Activated CD8-positive, alpha-beta T cell treated with anti-CD3 and anti-CD28 coated beads, Interleukin-2, amount 10 ng/mL, durations not matched to agents 7 days and 5 days (primary cell): ENCODE measurements at regions of chr14 and their contacts with region 1.

Region 1: DNA sequence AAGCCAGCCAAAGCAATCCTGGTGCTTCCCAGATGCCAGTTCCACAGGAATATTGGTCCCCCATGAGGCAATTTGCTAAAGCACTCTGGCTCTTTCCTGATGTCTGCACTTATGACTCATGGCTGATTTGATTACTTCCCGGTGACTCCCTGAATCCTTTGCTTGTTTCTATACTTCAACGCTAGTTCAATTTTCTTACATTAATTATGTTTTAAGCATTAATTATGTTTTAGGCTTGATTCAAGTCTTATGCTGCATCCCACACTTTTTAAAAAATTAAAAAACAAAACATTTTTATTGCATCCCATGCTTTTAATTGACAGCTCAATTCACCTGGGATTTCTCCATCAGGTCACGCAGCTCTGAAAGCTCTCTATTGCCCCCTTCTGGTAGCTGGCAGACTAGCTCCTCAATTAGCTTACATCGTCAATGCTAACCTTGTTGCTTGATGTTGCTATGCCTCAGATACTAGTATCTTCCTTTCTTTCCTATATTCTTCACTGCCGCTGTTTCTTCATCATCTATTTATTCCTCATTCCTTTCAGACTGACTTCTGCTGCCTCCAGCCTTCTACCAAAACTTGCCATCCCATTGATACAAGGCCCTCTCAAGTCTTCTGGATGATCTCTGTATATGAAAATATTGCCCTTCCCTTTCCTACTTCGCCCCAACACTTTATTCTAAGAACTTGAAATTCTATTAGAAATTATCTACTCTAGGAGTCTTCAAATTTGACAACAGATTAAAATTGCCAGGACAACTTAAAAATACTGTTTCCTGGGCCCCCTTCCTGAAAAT is 32.0 kb downstream of the TSHR start:
- DNase-seq: peak; percentile 77
- ATAC-seq: peak; percentile 78
- H3K4me3 Mint-ChIP-seq: no peak overlapping the region
- H3K27ac Mint-ChIP-seq: no peak overlapping the region
- H3K4me1 Mint-ChIP-seq: peaks cover 6% of the 10 kb centered on the region
- H3K27me3 Mint-ChIP-seq: peaks cover 3% of the 10 kb centered on the region

Region 2: DNA sequence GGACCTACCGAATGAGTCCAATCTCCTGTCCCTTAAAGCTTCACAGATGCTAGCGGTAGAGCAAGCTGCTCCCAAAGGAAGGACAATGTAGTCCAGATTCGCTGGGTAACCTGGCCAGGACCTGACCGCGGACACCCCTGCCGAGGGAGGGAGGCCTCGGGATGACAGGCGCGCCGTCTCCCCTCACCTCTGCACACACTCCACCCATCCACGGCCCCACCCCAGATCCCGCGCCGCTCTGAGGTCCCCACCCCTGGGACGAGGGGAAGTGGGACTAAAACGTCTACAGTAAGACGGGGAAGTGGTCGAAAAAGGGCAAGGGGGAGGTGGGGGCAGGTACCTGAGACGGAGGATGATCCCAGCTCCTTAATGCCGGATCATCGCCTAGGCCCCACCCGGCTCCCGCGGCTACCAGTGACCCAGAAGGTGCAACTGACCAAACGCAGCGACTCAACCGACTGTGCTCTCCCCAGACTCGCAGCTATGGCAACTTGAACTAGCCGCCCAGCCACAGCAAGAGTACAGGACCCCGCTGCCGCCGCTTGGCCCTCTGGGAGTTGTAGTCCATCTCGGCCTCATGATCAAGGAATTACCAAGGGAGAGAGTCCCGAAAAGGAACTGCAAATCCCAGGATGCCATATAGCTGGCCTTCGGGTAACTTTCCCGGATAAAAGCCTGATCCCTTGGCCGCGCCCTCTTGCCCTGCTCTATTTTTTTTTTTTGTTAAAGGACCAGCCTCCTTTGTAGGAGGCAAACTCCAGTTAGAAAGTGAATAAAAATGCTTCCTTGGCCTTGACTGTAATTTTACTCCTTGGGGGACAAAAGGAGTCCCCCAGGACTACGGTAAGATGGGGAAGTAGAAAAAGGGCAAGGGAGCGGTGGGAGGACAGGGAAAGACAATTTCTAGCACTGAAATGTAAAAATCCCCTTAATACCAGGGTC is 45.9 kb before region 1 on chr14 and contains the start of gene CEP128:
- CTCF ChIA-PET with region 1: interaction called, 38 read pairs
- POLR2A ChIA-PET with region 1: interaction called, 6 read pairs
- DNase-seq: peak; percentile 93
- ATAC-seq: peak; percentile 97
- H3K4me3 Mint-ChIP-seq: peak within 1 kb of the TSS; percentile 92
- H3K27ac Mint-ChIP-seq: peak within 1 kb of the TSS; percentile 87
- H3K4me1 Mint-ChIP-seq: peaks cover 29% of the 10 kb centered on the region
- H3K27me3 Mint-ChIP-seq: no peaks in the 10 kb centered on the region
- total RNA-seq, gene CEP128: 32.9 to 35.8 TPM

Region 3: DNA sequence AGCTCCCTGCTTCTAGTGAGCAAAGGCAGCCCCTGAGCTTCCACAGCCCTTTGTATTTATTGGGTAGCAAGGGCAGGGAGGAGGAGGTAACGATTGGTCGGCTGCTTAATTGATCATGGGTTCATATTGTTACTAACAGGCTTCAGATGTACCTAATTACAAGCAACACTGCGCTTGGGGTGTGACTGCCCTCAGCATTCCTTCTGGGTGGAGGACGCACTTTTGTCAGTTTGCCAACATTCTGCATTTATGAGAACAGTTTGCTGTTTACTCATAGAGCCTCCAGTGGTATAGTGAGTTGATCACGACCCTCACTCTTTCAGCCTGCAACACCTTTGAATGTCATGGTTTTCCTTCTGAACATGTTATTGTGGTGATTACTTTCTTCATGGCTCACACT is 22.4 kb before region 1 on chr14:
- CTCF ChIA-PET with region 1: interaction called, 268 read pairs
- POLR2A ChIA-PET with region 1: no interaction called
- DNase-seq: no peak
- ATAC-seq: no peak
- H3K4me3 Mint-ChIP-seq: no peak overlapping the region
- H3K27ac Mint-ChIP-seq: no peak overlapping the region
- H3K4me1 Mint-ChIP-seq: peaks cover 4% of the 10 kb centered on the region
- H3K27me3 Mint-ChIP-seq: peaks cover 18% of the 10 kb centered on the region

Region 4: GRCh38 chr14:81164167-81164774 is 176.8 kb after region 1 on chr14:
- CTCF ChIA-PET with region 1: interaction called, 36 read pairs
- POLR2A ChIA-PET with region 1: no interaction called
- DNase-seq: peak; percentile 69
- ATAC-seq: peak; percentile 92
- H3K4me3 Mint-ChIP-seq: no peak overlapping the region
- H3K27ac Mint-ChIP-seq: no peak overlapping the region
- H3K4me1 Mint-ChIP-seq: peaks cover 19% of the 10 kb centered on the region
- H3K27me3 Mint-ChIP-seq: no peaks in the 10 kb centered on the region